Naive thymus-derived CD4-positive, alpha-beta T cell (primary cell): ENCODE measurements at regions of chr2 and their contacts with region 1.

Region 1: GRCh38 chr2:62705007-62705829 is at the start of gene EHBP1:
- DNase-seq: peak; percentile 95 to 99 (median 98)
- ATAC-seq: peak; percentile 98
- H3K4me3 ChIP-seq: peak within 1 kb of the TSS; percentile 82
- H3K4me3 Mint-ChIP-seq: peak within 1 kb of the TSS; percentile 83 to 98 (median 92)
- H3K27ac ChIP-seq: peak within 1 kb of the TSS; percentile 72
- H3K27ac Mint-ChIP-seq: peak within 1 kb of the TSS; percentile 76 to 93 (median 84)
- H3K4me1 ChIP-seq: peaks cover 0 to 25% of the 10 kb centered on the region in 2 donors
- H3K4me1 Mint-ChIP-seq: peaks cover 24 to 48% (median 31%) of the 10 kb centered on the region in 7 donors
- H3K27me3 ChIP-seq: no peaks in the 10 kb centered on the region
- H3K27me3 Mint-ChIP-seq: peaks cover 0 to 13% (median 0%) of the 10 kb centered on the region in 5 donors
- total RNA-seq, gene EHBP1: 23.8 to 31.5 (median 30.0) TPM

Region 2: GRCh38 chr2:60818272-60818671 is 1886.9 kb before region 1 on chr2:
- CTCF ChIA-PET with region 1: no interaction called
- POLR2A ChIA-PET with region 1: no interaction called
- intact Hi-C with region 1: loop called in 1 of 2 experiments (anchors 10 kb)
- DNase-seq: peak in 2 of 9 donors; percentile 29 to 53
- ATAC-seq: no peak
- H3K4me3 ChIP-seq: no peak overlapping the region
- H3K4me3 Mint-ChIP-seq: peak overlapping the region in 2 of 10 donors; percentile 5 to 34
- H3K27ac ChIP-seq: no peak overlapping the region
- H3K27ac Mint-ChIP-seq: peak overlapping the region in 7 of 9 donors; percentile 28 to 92 (median 61)
- H3K4me1 ChIP-seq: peaks cover 24% of the 10 kb centered on the region in 2 donors
- H3K4me1 Mint-ChIP-seq: peaks cover 22 to 46% (median 37%) of the 10 kb centered on the region in 7 donors
- H3K27me3 ChIP-seq: no peaks in the 10 kb centered on the region
- H3K27me3 Mint-ChIP-seq: peaks cover 0 to 3% (median 0%) of the 10 kb centered on the region in 5 donors

Region 3: GRCh38 chr2:61470965-61471904 is 1234.0 kb before region 1 on chr2 and contains the start of gene USP34:
- CTCF ChIA-PET with region 1: no interaction called
- POLR2A ChIA-PET with region 1: no interaction called
- intact Hi-C with region 1: loop called in 1 of 2 experiments (anchors 5 kb)
- DNase-seq: peak; percentile 77 to 93 (median 88)
- ATAC-seq: peak; percentile 91
- H3K4me3 ChIP-seq: peak within 1 kb of the TSS; percentile 97
- H3K4me3 Mint-ChIP-seq: peak within 1 kb of the TSS; percentile 85 to 99 (median 96)
- H3K27ac ChIP-seq: peak within 1 kb of the TSS; percentile 98
- H3K27ac Mint-ChIP-seq: peak within 1 kb of the TSS; percentile 96 to 99 (median 97)
- H3K4me1 ChIP-seq: peaks cover 14 to 27% of the 10 kb centered on the region in 2 donors
- H3K4me1 Mint-ChIP-seq: peaks cover 11 to 45% (median 33%) of the 10 kb centered on the region in 7 donors
- H3K27me3 ChIP-seq: no peaks in the 10 kb centered on the region
- H3K27me3 Mint-ChIP-seq: no peaks in the 10 kb centered on the region
- total RNA-seq, gene USP34: 109 to 186 (median 165) TPM

Region 4: DNA sequence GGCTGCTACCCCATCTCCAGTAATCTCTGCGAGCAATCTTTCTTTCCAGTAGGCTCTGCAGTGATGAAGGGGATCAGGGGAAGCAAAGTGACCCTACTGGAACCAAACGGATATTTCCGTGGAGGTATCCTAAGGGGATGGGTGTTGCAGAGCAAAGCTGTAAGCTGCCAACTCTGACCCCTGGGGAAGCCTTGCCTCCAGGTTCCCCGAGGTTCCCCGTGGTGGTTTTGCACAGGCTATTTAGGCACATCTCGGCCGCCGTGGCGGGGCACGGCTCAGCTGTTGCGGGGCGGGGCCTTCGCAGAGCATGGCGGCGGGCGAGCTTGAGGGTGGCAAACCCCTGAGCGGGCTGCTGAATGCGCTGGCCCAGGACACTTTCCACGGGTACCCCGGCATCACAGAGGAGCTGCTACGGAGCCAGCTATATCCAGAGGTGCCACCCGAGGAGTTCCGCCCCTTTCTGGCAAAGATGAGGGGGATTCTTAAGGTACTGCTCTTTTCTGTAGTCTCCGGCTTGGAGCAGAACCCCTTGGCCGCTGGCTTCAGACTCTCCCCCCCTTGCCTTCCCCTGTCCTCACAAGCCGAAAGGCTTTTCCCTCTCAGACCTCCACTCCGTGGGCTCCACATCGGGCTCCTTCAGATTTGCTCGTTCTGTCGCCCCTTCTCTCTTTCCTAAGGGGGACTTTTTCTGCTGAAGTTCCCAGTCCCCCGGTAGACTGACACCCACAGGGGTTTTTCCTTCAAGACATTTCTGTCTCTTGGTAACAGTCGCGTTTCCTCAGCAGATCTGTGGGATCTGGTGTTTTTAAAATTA is 799.6 kb before region 1 on chr2 and contains the start of gene COMMD1:
- CTCF ChIA-PET with region 1: interaction called, 3 read pairs
- POLR2A ChIA-PET with region 1: interaction called, 3 read pairs
- intact Hi-C with region 1: loop called (anchors 1 to 5 kb)
- DNase-seq: peak; percentile 64 to 81 (median 76)
- ATAC-seq: peak; percentile 99
- H3K4me3 ChIP-seq: peak within 1 kb of the TSS; percentile 76
- H3K4me3 Mint-ChIP-seq: peak within 1 kb of the TSS; percentile 95 to 98 (median 96)
- H3K27ac ChIP-seq: peak within 1 kb of the TSS; percentile 83
- H3K27ac Mint-ChIP-seq: peak within 1 kb of the TSS; percentile 80 to 97 (median 86)
- H3K4me1 ChIP-seq: peaks cover 0 to 12% of the 10 kb centered on the region in 2 donors
- H3K4me1 Mint-ChIP-seq: peaks cover 14 to 42% (median 30%) of the 10 kb centered on the region in 7 donors
- H3K27me3 ChIP-seq: no peaks in the 10 kb centered on the region
- H3K27me3 Mint-ChIP-seq: no peaks in the 10 kb centered on the region
- total RNA-seq, gene COMMD1: 15.6 to 28.3 (median 20.8) TPM

Region 5: DNA sequence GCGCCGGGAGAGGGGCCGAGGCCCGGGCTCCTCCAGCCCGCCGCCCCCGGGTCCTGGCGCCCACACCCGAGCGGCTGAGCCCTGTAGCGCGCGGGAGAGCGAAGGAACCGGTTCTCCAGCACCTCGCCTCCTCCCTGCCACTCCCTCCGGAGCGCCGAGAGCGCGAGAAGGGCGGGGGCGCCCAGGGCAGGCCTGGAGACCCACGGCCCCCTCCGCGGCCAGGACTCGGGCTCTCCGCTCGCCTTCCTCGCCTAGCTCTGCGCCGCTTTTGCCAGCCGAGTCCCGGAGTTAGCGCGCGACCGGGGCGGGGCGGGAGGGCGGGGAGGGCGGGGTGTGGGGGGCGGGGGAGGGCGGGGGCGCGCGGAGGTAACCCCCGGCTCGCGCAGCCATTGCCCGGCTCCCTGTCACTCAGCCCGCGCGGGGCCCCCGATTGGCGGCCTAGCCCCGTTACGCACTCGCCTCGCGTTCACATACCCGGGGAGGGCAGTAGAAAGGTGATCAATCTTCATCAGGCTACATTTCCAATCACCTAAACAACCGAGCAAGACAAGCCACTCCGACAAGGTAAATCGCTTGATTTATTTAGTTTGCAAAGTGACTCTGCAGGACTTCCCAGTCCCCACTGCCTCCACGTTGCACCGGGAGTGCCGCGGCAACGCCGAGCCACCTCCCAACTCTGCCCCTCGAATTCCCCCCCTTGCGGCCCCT is 345.3 kb after region 1 on chr2 and contains the start of gene OTX1:
- CTCF ChIA-PET with region 1: no interaction called
- POLR2A ChIA-PET with region 1: no interaction called
- intact Hi-C with region 1: loop called in 1 of 2 experiments (anchors 5 kb)
- DNase-seq: peak in 1 of 9 donors; percentile 52
- ATAC-seq: peak; percentile 49
- H3K4me3 ChIP-seq: peak within 1 kb of the TSS; percentile 52
- H3K4me3 Mint-ChIP-seq: peak within 1 kb of the TSS; percentile 83 to 93 (median 86)
- H3K27ac ChIP-seq: no peak within 1 kb of the TSS
- H3K27ac Mint-ChIP-seq: peak within 1 kb of the TSS in 1 of 9 donors; percentile 69
- H3K4me1 ChIP-seq: peaks cover 26 to 35% of the 10 kb centered on the region in 2 donors
- H3K4me1 Mint-ChIP-seq: peaks cover 41 to 80% (median 68%) of the 10 kb centered on the region in 7 donors
- H3K27me3 ChIP-seq: peaks cover 10 to 24% of the 10 kb centered on the region in 2 donors
- H3K27me3 Mint-ChIP-seq: peaks cover 65 to 88% (median 82%) of the 10 kb centered on the region in 5 donors
- total RNA-seq, gene OTX1: not detected